HepG2 (cell line): ENCODE measurements at regions of chr19 and their contacts with region 1.

Region 1: GRCh38 chr19:11197264-11198174 is at the start of gene KANK2:
- DNase-seq: peak; percentile 68
- ATAC-seq: peak; percentile 86
- H3K4me3 ChIP-seq: peak within 1 kb of the TSS; percentile 72 to 89 (median 83)
- H3K27ac ChIP-seq: peak within 1 kb of the TSS; percentile 49
- H3K4me1 ChIP-seq: peaks cover 18% of the 10 kb centered on the region
- H3K27me3 ChIP-seq: no peaks in the 10 kb centered on the region; a peak in 1 of 5 replicates
- CTCF ChIP-seq: peak; percentile 60
- EP300 ChIP-seq: no peak; a peak in 1 of 4 replicates
- POLR2A ChIP-seq: peak; percentile 58 to 86
- RAD21 ChIP-seq: peak; percentile 69
- total RNA-seq, gene KANK2: 11.0 and 12.9 TPM in 2 replicates

Region 2: DNA sequence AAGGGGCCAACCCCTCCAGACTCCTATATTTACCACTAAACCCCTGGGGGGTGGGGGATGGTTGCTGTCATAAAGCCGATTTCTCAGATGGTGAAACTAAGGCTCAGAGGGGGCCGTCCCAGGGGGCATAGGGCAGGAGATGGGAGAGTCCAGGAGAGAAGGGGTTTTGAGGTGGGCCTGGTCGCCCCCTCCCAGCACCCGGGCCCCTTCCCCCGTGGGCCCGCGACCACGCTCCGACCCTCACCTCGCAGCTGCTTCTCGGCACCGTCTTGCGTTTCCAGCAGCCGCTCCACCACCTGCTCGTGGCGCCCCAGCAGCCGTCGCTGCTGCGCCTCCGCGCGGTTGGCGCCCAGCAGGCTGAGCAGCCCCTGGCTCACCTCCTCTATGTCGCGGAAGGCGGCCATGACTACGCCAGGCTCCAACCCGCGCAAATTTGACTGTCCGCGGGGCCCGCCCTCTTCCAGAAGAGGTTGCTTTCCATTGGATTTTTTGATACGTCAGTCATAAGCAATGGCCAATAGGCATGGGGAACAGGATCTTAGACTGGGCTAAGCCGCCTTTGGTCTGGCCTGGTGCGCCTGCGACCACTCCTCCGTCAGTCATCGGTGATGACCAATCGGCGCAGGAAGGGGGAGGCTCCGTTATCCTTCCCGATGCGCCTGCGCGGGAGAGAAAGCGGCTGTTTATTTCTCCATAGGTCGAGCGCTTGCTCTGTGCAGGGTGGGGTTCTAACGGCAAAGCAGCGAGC is 42.0 kb before region 1 on chr19 and contains the start of gene SPC24:
- CTCF ChIA-PET with region 1: no interaction called
- POLR2A ChIA-PET with region 1: no interaction called
- in situ Hi-C with region 1: loop called (anchors 5 kb)
- intact Hi-C with region 1: no loop called
- DNase-seq: peak; percentile 98
- ATAC-seq: peak; percentile 97
- H3K4me3 ChIP-seq: peak within 1 kb of the TSS; percentile 92 to 99 (median 93)
- H3K27ac ChIP-seq: peak within 1 kb of the TSS; percentile 49
- H3K4me1 ChIP-seq: peaks cover 65% of the 10 kb centered on the region
- H3K27me3 ChIP-seq: no peaks in the 10 kb centered on the region; a peak in 1 of 5 replicates
- CTCF ChIP-seq: peak; percentile 29
- EP300 ChIP-seq: no peak
- POLR2A ChIP-seq: peak; percentile 75 to 76
- RAD21 ChIP-seq: peak; percentile 33; the same call in 1 of the 2 replicates
- total RNA-seq, gene SPC24: 46.2 and 63.2 TPM in 2 replicates